Astrocyte of the cerebellum (primary cell): ENCODE measurements at regions of chr4 and their contacts with region 1.

Region 1: DNA sequence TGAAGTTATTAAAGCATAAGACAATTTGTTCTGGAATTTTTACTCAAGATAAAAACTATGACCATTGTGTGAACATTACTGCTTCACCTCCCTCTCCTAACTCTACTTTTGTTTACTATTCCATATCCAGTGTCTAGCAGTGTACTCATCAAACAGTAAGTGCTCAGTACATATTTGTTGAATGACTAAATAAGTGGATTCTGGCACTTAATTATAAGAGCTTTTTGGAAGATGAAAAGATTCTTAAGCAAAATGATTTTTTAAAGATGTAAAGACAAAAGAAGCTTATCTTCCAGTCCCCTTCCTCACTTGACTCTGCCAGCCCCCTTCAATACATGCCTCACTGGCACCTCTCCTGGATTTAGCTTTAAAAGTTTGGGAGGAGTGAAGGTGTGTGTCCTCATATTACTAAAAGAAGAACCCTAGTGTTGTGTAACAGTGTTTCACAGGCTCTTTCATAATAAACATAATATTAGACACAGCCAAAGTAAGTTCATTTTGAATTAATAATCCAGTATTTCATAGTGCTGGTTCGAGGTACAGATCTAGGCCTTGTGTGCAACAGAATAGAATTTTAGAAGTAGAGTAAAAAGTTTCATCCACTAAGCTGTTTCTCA is 53.0 kb downstream of the GAB1 start:
- DNase-seq: no peak
- H3K4me3 ChIP-seq: no peak overlapping the region
- CTCF ChIP-seq: no peak

Region 2: GRCh38 chr4:143329985-143330384 is 59.7 kb before region 1 on chr4:
- in situ Hi-C with region 1: loop called (anchors 5 kb)
- DNase-seq: no peak
- H3K4me3 ChIP-seq: no peak overlapping the region
- CTCF ChIP-seq: no peak

Region 3: GRCh38 chr4:143351774-143352451 is 37.8 kb before region 1 on chr4:
- in situ Hi-C with region 1: no loop called
- DNase-seq: no peak
- H3K4me3 ChIP-seq: no peak overlapping the region
- CTCF ChIP-seq: no peak